Psoas muscle (tissue), 8 donors: ENCODE measurements at regions of chr6 and their contacts with region 1.

Region 1: DNA sequence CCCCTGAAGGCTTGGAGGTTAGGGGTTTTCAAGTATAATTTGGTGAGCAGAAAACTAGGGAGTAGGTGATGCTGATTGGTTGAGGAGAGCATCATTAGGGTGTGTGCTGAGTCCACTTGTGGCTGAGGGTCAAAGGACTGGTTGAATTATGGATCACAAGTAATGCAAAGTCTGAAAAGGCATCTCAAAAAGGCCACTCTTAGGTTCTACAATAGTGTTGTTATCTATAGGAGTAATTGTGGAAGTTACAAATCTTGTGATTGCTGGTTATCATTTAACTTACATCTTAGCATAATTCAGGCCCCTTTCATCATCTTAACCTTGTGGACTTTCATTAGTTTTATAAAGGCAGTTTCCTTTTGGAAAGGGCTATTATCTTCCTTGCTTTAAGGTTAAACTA is 60.8 kb downstream of the UBR2 start:
- DNase-seq: no peak
- ATAC-seq: no peak
- H3K4me3 ChIP-seq: no peak overlapping the region
- H3K27ac ChIP-seq: no peak overlapping the region
- H3K4me1 ChIP-seq: no peaks in the 10 kb centered on the region
- H3K27me3 ChIP-seq: no peaks in the 10 kb centered on the region
- CTCF ChIP-seq: no peak

Region 2: GRCh38 chr6:42572523-42572922 is 52.1 kb before region 1 on chr6:
- intact Hi-C with region 1: loop called in 1 of 2 experiments (anchors 5 kb)
- DNase-seq: no peak
- ATAC-seq: no peak
- H3K4me3 ChIP-seq: no peak overlapping the region
- H3K27ac ChIP-seq: no peak overlapping the region
- H3K4me1 ChIP-seq: peaks cover 60% of the 10 kb centered on the region
- H3K27me3 ChIP-seq: no peaks in the 10 kb centered on the region
- CTCF ChIP-seq: no peak

Region 3: GRCh38 chr6:42978839-42979522 is 354.4 kb after region 1 on chr6 and contains the start of gene PEX6:
- intact Hi-C with region 1: no loop called
- DNase-seq: peak; percentile 93 to 94
- ATAC-seq: peak; percentile 87 to 92 (median 92)
- H3K4me3 ChIP-seq: peak within 1 kb of the TSS; percentile 98
- H3K27ac ChIP-seq: peak within 1 kb of the TSS; percentile 98
- H3K4me1 ChIP-seq: peaks cover 21% of the 10 kb centered on the region
- H3K27me3 ChIP-seq: no peaks in the 10 kb centered on the region
- CTCF ChIP-seq: no peak
- total RNA-seq, gene PEX6: 15.4 to 37.4 (median 25.8) TPM